ENCODE measurements at regions of chr1 and their contacts with region 1.

Region 1: DNA sequence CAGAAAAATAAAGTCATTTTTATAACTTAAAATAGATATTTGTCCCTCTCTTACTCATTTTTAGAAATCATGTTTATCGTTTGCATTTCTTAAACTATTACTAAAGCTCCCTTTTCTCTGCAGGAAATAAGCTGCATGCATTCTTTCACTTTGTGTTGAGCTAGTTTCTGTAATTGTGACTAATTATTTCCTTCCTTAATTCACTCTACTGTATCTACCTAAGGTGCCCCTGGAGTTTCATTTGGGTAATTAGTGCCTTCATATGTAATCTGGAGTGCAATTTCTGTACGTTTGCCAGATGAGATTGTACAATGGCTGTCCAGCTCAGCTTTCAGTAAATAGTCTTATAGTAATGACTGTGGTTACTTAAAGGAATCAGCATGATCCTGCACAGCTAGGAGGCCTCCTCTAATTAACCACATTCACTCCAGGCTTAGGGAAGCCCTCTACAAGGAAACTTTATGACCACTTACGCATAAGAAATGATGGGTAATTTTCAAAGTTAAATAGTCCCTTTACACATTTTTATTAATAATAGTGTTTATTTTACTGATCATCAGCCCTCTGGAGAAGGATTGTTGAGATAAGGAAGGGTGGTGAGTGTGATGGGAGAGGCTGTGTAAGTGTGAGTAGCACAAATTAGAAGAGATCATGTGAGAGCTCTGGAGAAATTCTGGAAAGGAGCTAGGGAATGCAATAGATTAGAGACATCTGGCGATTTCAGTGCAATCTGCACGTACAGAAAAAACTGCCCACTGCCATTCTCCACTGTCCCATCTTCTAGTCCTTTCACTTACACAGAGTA is 86.8 kb downstream of the LRRC8C start:
- DNase-seq: peak; percentile 62
- ATAC-seq: peak; percentile 88
- H3K4me3 ChIP-seq: peak overlapping the region in 2 of 5 experiments; percentile 19 to 30
- H3K4me3 Mint-ChIP-seq: peak overlapping the region; percentile 64
- H3K27ac ChIP-seq: peak overlapping the region; percentile 11 to 45
- H3K27ac Mint-ChIP-seq: peak overlapping the region; percentile 42
- H3K4me1 ChIP-seq: peaks cover 38 to 46% of the 10 kb centered on the region in 2 donors
- H3K4me1 Mint-ChIP-seq: peaks cover 53% of the 10 kb centered on the region
- H3K27me3 ChIP-seq: no peaks in the 10 kb centered on the region
- H3K27me3 Mint-ChIP-seq: no peaks in the 10 kb centered on the region
- CTCF ChIP-seq: peak; percentile 18

Region 2: GRCh38 chr1:89670163-89670562 is 49.5 kb before region 1 on chr1:
- CTCF ChIA-PET with region 1: no interaction called
- POLR2A ChIA-PET with region 1: no interaction called
- intact Hi-C with region 1: loop called (anchors 1 kb)
- DNase-seq: peak; percentile 90
- ATAC-seq: peak; percentile 98
- H3K4me3 ChIP-seq: no peak overlapping the region
- H3K4me3 Mint-ChIP-seq: peak overlapping the region; percentile 61
- H3K27ac ChIP-seq: peak overlapping the region; percentile 19 to 57
- H3K27ac Mint-ChIP-seq: peak overlapping the region; percentile 59
- H3K4me1 ChIP-seq: peaks cover 21 to 22% of the 10 kb centered on the region in 2 donors
- H3K4me1 Mint-ChIP-seq: peaks cover 44% of the 10 kb centered on the region
- H3K27me3 ChIP-seq: no peaks in the 10 kb centered on the region
- H3K27me3 Mint-ChIP-seq: no peaks in the 10 kb centered on the region
- CTCF ChIP-seq: no peak

Region 3: DNA sequence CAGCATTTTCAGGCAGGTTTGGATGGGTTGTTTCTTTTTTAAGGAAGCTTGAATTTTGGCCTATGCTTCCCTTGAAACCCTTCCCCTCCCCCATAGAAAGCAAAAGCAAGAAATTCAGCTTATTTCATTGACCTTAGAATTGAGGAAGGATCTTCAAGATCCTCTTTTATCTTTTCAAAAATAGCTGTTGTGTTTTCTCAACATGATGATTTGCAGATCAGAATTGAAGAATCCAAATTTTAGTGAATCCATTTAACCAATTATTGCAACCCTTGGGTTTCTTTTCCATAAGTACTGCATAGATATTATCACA is 13.0 kb before region 1 on chr1:
- CTCF ChIA-PET with region 1: interaction called, 12 read pairs
- POLR2A ChIA-PET with region 1: no interaction called
- intact Hi-C with region 1: loop called (anchors 2 kb)
- DNase-seq: peak; percentile 65
- ATAC-seq: peak; percentile 63
- H3K4me3 ChIP-seq: peak overlapping the region in 2 of 5 experiments; percentile 8 to 16
- H3K4me3 Mint-ChIP-seq: peak overlapping the region; percentile 64
- H3K27ac ChIP-seq: peak overlapping the region in 1 of 2 donors; percentile 52
- H3K27ac Mint-ChIP-seq: peak overlapping the region; percentile 27
- H3K4me1 ChIP-seq: peaks cover 32 to 34% of the 10 kb centered on the region in 2 donors
- H3K4me1 Mint-ChIP-seq: peaks cover 34% of the 10 kb centered on the region
- H3K27me3 ChIP-seq: no peaks in the 10 kb centered on the region
- H3K27me3 Mint-ChIP-seq: no peaks in the 10 kb centered on the region
- CTCF ChIP-seq: no peak

Region 4: DNA sequence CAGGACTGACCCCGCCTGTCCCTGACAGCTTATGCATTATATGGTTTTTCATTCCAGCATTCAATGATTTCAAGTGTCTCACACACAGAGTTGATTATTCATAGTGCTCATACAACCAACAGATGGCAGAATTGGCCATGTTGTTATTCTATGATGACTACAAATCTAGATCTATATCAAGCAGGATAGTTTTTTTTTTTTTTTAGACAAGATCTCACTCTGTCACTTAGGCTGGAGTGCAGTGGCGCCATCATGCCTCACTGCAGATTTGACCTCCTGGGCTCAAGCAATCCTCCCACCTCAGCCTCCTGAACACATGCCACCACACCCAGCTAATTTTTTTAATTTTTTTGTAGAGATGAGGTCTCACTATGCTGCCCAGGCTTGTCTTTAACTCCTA is 61.0 kb after region 1 on chr1:
- CTCF ChIA-PET with region 1: no interaction called
- POLR2A ChIA-PET with region 1: no interaction called
- intact Hi-C with region 1: no loop called
- DNase-seq: peak; percentile 25
- ATAC-seq: peak; percentile 31
- H3K4me3 ChIP-seq: no peak overlapping the region
- H3K4me3 Mint-ChIP-seq: no peak overlapping the region
- H3K27ac ChIP-seq: no peak overlapping the region
- H3K27ac Mint-ChIP-seq: no peak overlapping the region
- H3K4me1 ChIP-seq: no peaks in the 10 kb centered on the region
- H3K4me1 Mint-ChIP-seq: no peaks in the 10 kb centered on the region
- H3K27me3 ChIP-seq: no peaks in the 10 kb centered on the region
- H3K27me3 Mint-ChIP-seq: peaks cover 14% of the 10 kb centered on the region
- CTCF ChIP-seq: peak; percentile 35

Region 5: GRCh38 chr1:89908672-89909436 is 189.2 kb after region 1 on chr1:
- CTCF ChIA-PET with region 1: no interaction called
- POLR2A ChIA-PET with region 1: no interaction called
- intact Hi-C with region 1: no loop called
- DNase-seq: no peak
- ATAC-seq: no peak
- H3K4me3 ChIP-seq: no peak overlapping the region
- H3K4me3 Mint-ChIP-seq: no peak overlapping the region
- H3K27ac ChIP-seq: no peak overlapping the region
- H3K27ac Mint-ChIP-seq: no peak overlapping the region
- H3K4me1 ChIP-seq: peaks cover 8 to 20% of the 10 kb centered on the region in 2 donors
- H3K4me1 Mint-ChIP-seq: peaks cover 57% of the 10 kb centered on the region
- H3K27me3 ChIP-seq: no peaks in the 10 kb centered on the region
- H3K27me3 Mint-ChIP-seq: no peaks in the 10 kb centered on the region
- CTCF ChIP-seq: no peak

Measured in B cell (primary cell).